OCI-LY7 (cell line): ENCODE measurements at regions of chr1 and their contacts with region 1.

Region 1: DNA sequence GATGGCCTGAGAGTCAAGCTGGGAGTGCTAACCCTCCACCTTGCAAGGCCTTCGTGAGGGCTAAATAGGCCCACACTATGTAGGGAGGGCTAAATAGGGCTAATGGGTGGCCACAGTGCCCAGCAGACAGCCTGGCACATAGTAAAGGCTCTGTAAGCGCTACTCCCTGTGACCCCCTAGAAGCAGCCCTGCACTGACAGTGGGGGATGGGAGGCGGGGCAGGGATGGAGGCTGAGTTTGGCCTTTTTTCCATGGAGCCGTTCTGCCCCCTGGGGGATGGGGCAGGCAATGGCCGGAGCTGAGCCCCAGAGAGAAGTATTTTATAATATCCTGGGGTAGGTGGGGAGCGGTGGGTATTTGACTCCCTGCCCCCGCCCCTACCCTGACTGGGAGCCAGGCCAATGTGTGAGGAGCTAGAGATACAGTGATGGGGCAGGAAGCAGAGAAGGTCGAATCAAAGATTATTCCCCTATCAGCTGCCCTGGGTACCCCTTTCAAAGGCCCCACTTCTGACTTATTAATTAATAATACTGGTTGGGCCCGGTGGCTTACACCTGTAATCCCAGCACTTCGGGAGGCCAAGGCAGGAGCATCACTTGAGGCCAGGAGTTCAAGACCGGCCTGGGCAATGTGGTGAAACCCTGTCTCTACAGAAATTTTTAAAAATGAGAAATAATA is 42.3 kb downstream of the LACTBL1 start:
- DNase-seq: peak; percentile 51
- H3K4me3 ChIP-seq: no peak overlapping the region
- H3K27ac ChIP-seq: no peak overlapping the region
- H3K4me1 ChIP-seq: no peaks in the 10 kb centered on the region
- CTCF ChIP-seq: peak; percentile 78

Region 2: DNA sequence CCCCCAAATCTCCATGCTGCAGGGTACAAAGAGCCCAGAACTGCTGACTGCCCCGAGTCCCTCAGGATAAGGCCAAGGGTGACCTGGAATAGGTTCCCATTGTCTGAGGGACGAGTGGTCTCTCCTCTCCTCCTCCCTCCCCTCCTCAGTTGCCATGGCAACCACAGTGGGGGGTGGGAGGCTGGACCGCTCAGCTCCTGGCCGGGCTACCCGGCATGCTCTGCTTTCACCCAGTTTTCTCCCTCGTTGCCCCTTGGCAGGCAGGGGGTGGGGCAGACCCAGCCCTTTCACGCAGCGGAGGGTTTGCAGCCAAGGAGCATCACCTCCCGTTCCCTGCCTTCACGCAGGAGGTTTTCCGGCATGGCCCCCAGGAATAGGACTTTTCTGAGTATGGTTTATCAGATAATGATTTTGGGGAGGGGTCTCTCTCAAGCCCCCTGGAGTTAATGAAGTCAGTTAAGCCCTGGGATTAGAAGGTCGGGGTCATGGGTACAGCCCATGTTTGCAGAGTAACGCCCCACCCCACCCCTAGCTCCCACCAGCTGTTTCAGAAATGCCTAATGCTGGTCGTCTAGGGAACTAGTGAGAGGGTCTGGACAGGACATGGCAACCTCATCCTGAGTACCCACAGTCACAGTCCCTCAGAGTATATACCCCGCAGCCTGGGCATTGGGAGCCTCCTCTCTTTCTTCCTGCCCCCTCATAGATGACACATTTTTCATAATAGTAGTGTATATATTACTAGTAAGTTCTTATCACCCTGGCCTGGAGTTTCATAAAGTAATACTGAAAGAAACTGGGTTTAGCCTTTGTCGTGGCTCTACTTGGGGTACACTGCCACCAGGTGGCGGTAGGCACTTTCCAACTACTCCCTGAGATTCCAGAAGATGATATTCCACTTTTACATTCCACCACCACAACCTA is 256.6 kb before region 1 on chr1:
- CTCF ChIA-PET with region 1: no interaction called
- POLR2A ChIA-PET with region 1: no interaction called
- intact Hi-C with region 1: loop called (anchors 1 kb)
- DNase-seq: peak; percentile 36
- H3K4me3 ChIP-seq: no peak overlapping the region
- H3K27ac ChIP-seq: no peak overlapping the region
- H3K4me1 ChIP-seq: no peaks in the 10 kb centered on the region
- CTCF ChIP-seq: peak; percentile 94

Region 3: GRCh38 chr1:22704440-22705067 is 225.8 kb before region 1 on chr1:
- CTCF ChIA-PET with region 1: no interaction called
- POLR2A ChIA-PET with region 1: no interaction called
- intact Hi-C with region 1: loop called (anchors 1 kb)
- DNase-seq: peak; percentile 75
- H3K4me3 ChIP-seq: no peak overlapping the region
- H3K27ac ChIP-seq: no peak overlapping the region
- H3K4me1 ChIP-seq: no peaks in the 10 kb centered on the region
- CTCF ChIP-seq: peak; percentile 81

Region 4: DNA sequence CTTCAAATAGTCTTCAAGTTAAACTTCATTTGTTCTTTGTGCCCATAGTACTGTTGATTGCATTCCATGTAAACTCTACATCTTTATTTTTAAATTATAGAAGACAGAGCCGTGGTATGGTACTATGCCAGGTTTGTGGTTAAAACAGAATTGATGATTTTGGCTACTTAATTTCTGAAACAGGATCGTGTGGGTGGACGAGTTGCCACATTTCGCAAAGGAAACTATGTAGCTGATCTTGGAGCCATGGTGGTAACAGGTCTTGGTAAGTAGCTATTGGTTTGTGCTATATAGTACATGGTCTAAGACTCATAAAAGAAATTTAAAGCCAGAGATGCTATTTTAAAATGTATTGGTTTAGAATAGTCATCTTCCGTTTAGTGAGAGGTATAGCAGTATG is 126.9 kb after region 1 on chr1:
- CTCF ChIA-PET with region 1: no interaction called
- POLR2A ChIA-PET with region 1: no interaction called
- intact Hi-C with region 1: no loop called
- DNase-seq: no peak
- H3K4me3 ChIP-seq: no peak overlapping the region
- H3K27ac ChIP-seq: no peak overlapping the region
- H3K4me1 ChIP-seq: no peaks in the 10 kb centered on the region
- CTCF ChIP-seq: no peak

Region 5: DNA sequence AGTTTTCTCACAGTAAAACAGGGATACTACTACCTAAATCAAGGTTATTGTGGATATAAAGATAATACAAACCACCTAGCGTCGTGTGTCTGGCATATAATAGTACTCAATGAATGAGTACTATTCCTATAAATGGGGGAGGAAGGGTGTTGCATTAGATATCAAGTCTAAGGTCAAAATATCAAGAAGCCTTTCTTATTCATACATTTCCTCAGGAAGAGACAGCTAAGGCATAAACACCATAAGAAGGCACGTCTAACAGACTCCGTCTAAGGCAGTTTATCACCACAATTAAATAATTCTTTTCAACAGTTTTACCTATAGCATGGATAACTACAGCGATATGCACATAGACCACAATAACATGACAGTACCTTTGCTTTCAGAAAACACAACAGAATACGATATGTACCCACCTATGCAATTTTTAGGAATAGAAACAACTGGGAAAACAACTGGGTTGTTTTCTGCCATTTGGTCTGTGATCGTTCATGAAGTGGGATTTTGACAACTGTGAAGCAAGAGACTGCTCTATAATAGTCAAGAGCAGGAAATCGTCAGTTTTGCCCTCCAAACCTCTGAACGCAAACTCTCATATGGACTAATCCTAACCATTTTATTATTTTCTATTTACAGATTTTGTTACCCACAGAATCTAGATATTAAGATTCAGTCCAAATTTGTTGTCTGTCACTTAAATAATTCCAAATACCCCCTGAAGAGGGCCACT is 360.6 kb after region 1 on chr1:
- CTCF ChIA-PET with region 1: no interaction called
- POLR2A ChIA-PET with region 1: no interaction called
- intact Hi-C with region 1: no loop called
- DNase-seq: no peak
- H3K4me3 ChIP-seq: no peak overlapping the region
- H3K27ac ChIP-seq: no peak overlapping the region
- H3K4me1 ChIP-seq: no peaks in the 10 kb centered on the region
- CTCF ChIP-seq: 0 out of 2 replicates have a peak, but pooled peaks have one; percentile 26